A673 (cell line): ENCODE measurements at regions of chr5 and their contacts with region 1.

Region 1: GRCh38 chr5:86968301-86968753 is 299.4 kb upstream of the RASA1 start:
- DNase-seq: peak; percentile 70
- H3K4me3 ChIP-seq: no peak overlapping the region
- H3K27ac ChIP-seq: no peak overlapping the region
- H3K4me1 ChIP-seq: no peaks in the 10 kb centered on the region
- H3K27me3 ChIP-seq: no peaks in the 10 kb centered on the region
- CTCF ChIP-seq: peak; percentile 59

Region 2: GRCh38 chr5:86118542-86118941 is 849.8 kb before region 1 on chr5:
- CTCF ChIA-PET with region 1: interaction called, 14 read pairs
- POLR2A ChIA-PET with region 1: no interaction called
- intact Hi-C with region 1: no loop called
- DNase-seq: no peak
- H3K4me3 ChIP-seq: no peak overlapping the region
- H3K27ac ChIP-seq: no peak overlapping the region
- H3K4me1 ChIP-seq: no peaks in the 10 kb centered on the region
- H3K27me3 ChIP-seq: no peaks in the 10 kb centered on the region
- CTCF ChIP-seq: peak; percentile 33; the same call in 1 of the 2 replicates

Region 3: DNA sequence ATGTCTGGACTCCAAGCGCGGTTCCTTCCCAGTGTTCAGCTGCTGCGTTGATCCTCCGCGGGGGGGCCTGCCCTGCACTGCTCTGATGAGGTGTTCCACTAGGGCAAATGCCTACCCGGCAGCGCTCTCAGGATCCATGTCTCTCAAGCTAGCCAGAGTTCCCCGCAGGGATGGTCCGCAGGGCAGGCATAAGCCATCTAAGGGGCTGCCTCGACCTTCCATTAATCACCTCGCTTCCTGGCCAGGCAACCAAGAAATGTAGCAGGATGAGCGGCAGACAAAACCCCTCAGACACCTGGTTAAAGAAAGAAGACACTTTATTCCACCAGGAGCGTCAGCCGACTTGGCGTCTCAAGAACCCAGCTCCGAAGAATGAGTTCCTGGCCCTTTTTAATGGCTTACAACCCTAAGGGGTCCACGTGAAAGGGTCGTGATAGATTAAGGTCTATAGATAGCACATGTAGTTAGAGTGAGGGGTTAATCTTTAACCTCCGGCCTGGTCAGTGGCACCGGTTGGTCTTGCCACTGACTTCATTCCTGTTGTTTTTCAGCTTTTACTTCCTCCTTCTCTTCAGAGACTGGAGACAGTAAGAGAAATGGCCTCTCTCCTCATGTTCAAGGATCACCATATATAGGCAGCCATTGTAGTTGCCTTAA is 397.8 kb before region 1 on chr5:
- CTCF ChIA-PET with region 1: no interaction called
- POLR2A ChIA-PET with region 1: no interaction called
- intact Hi-C with region 1: no loop called
- DNase-seq: no peak
- H3K4me3 ChIP-seq: no peak overlapping the region
- H3K27ac ChIP-seq: no peak overlapping the region
- H3K4me1 ChIP-seq: no peaks in the 10 kb centered on the region
- H3K27me3 ChIP-seq: no peaks in the 10 kb centered on the region
- CTCF ChIP-seq: no peak

Region 4: GRCh38 chr5:86596476-86596875 is 371.9 kb before region 1 on chr5:
- CTCF ChIA-PET with region 1: no interaction called
- POLR2A ChIA-PET with region 1: no interaction called
- intact Hi-C with region 1: no loop called
- DNase-seq: no peak
- H3K4me3 ChIP-seq: no peak overlapping the region
- H3K27ac ChIP-seq: no peak overlapping the region
- H3K4me1 ChIP-seq: no peaks in the 10 kb centered on the region
- H3K27me3 ChIP-seq: no peaks in the 10 kb centered on the region
- CTCF ChIP-seq: no peak

Region 5: DNA sequence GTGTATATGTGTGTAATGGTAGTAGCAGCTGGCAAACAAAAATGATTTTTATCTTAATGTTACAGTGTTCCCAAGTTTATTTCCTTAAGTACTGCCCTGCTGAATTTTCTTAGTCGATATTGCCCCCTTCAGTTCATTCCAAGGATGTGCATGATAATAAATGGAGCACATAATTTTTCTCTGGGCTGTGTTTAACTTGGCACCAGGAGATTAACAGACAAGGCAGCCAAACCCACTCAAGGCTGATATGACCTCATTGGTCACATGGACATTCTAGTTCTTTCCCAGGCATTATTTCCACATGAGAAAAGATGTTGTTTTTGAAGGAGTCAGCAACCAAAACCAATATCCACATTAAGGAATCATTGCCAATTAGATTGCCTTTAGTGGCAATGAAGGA is 288.8 kb before region 1 on chr5:
- CTCF ChIA-PET with region 1: no interaction called
- POLR2A ChIA-PET with region 1: no interaction called
- intact Hi-C with region 1: loop called (anchors 10 kb)
- DNase-seq: peak; percentile 80
- H3K4me3 ChIP-seq: no peak overlapping the region
- H3K27ac ChIP-seq: no peak overlapping the region
- H3K4me1 ChIP-seq: peaks cover 16% of the 10 kb centered on the region
- H3K27me3 ChIP-seq: no peaks in the 10 kb centered on the region
- CTCF ChIP-seq: peak; percentile 78

Region 6: DNA sequence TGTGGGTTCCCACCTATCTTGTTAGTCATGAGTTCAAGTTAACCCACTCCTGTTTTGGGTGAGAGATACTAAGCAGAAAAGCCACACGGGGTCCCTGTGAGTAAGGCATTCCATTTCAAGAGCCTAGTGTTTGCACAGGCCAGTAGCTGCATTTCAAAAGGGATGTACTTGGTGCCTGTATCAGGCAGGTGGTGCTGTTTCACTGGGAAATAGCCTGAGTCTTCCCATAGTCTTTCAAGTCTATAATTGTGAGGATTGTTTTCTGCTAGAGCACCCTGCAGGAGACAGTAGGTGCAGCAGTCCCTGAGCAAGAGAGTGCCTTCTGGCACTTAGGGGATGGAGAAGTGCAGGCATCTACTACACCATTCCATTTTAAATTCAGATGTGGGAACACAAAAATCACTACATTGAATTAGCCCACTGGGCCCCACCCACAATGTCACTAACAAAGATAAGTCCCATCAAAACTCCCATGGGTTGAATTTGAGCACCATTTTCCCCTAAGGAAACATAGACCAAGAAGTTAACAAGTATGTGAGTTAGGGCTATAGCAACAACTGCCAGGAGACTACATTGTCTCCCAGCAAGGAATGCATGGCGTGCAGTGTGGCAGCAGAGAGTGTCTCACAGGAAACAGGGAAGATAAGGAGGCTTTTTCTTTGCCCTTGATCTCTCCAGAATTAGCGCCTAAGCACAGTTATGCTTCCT is 87.4 kb before region 1 on chr5:
- CTCF ChIA-PET with region 1: interaction called, 16 read pairs
- POLR2A ChIA-PET with region 1: no interaction called
- intact Hi-C with region 1: loop called (anchors 2 kb)
- DNase-seq: peak; percentile 86
- H3K4me3 ChIP-seq: no peak overlapping the region
- H3K27ac ChIP-seq: no peak overlapping the region
- H3K4me1 ChIP-seq: no peaks in the 10 kb centered on the region
- H3K27me3 ChIP-seq: no peaks in the 10 kb centered on the region
- CTCF ChIP-seq: peak; percentile 86

Region 7: DNA sequence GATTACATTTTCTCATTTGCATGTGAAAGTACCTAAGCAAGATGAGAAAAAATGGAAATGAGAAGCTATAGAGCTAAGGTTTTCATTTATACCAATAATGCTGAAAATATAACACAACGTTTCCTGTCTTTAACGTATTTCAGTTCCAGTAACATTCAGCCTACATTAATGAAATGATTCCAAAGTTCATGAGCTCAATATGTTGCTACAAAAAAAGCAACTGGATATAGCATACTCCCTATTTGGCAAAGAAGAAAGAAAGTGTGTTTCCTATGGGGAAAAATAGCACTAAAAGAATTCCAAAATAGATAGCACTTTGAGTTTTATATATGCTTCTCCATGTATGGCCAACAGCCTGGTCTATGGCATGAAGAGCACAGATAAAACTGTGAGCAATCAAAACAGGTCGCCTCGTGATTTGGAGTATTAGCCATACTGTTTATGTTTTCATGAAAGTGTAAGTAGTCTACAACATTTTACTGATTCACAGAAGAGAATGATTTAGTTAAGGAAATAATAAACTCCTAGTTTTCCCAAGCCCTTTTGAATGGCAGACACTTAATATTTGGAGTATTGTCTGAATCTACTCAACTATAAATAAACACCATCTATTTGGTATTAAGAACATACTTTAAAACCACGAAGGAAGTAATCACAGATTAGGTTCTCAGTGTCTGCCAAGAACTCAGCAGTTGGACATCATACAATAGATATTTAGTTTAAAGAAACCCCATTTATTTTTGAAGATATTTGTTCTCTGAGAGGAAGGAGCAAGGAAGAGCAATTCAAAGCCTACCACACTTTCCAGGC is 40.6 kb after region 1 on chr5:
- CTCF ChIA-PET with region 1: no interaction called
- POLR2A ChIA-PET with region 1: no interaction called
- intact Hi-C with region 1: loop called (anchors 2 kb)
- DNase-seq: peak; percentile 46
- H3K4me3 ChIP-seq: no peak overlapping the region
- H3K27ac ChIP-seq: no peak overlapping the region
- H3K4me1 ChIP-seq: peaks cover 4% of the 10 kb centered on the region
- H3K27me3 ChIP-seq: no peaks in the 10 kb centered on the region
- CTCF ChIP-seq: no peak

Region 8: DNA sequence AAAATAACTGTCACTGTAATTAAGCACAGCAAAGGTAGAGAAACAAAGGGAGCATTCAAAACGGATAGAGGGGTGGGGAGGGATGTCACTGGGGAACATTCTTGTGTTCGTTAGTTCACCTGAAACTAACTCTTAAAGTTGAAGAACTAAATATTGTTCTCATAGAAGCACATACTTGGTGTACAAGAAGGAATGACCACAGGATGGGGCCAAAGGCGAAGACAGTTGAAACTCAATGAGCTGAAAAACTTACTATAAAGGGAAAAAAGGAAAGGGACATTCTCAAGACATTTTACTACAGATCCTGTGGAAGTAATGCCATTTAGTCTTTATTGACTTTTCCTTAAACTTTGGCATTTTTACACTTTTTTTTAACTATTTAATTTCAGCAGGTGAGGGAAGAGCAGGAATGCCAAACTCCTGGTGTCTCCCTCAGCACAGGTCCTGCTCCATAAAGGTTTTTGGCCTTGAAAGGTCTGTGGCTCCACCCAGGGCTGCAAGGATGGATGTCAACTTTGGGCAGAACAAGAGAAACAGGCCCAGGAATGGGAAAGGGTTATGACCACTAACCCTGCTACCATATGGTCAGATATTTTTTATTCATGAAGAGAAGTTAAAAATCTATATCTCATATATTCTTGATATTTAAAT is 101.8 kb after region 1 on chr5:
- CTCF ChIA-PET with region 1: no interaction called
- POLR2A ChIA-PET with region 1: no interaction called
- intact Hi-C with region 1: no loop called
- DNase-seq: peak; percentile 65
- H3K4me3 ChIP-seq: no peak overlapping the region
- H3K27ac ChIP-seq: no peak overlapping the region
- H3K4me1 ChIP-seq: no peaks in the 10 kb centered on the region
- H3K27me3 ChIP-seq: no peaks in the 10 kb centered on the region
- CTCF ChIP-seq: peak; percentile 52

Region 9: GRCh38 chr5:87327998-87328397 is 359.7 kb after region 1 on chr5:
- CTCF ChIA-PET with region 1: no interaction called
- POLR2A ChIA-PET with region 1: no interaction called
- intact Hi-C with region 1: no loop called
- DNase-seq: no peak
- H3K4me3 ChIP-seq: no peak overlapping the region
- H3K27ac ChIP-seq: no peak overlapping the region
- H3K4me1 ChIP-seq: peaks cover 13% of the 10 kb centered on the region
- H3K27me3 ChIP-seq: no peaks in the 10 kb centered on the region
- CTCF ChIP-seq: no peak